ENCODE measurements at regions of chr6 and their contacts with region 1.

Region 1: GRCh38 chr6:53189554-53189953 is 40.9 kb upstream of the GCM1 start:
- DNase-seq: no peak
- ATAC-seq: peak; percentile 20; the same call in 2 of the 3 replicates
- H3K4me3 ChIP-seq: no peak overlapping the region
- H3K27ac ChIP-seq: no peak overlapping the region
- H3K4me1 ChIP-seq: no peaks in the 10 kb centered on the region; the same call in 1 of the 2 replicates
- H3K27me3 ChIP-seq: no peaks in the 10 kb centered on the region
- CTCF ChIP-seq: no peak
- EP300 ChIP-seq: no peak
- POLR2A ChIP-seq: no peak
- RAD21 ChIP-seq: no peak

Region 2: GRCh38 chr6:52801188-52801841 is 388.2 kb before region 1 on chr6:
- CTCF ChIA-PET with region 1: no interaction called
- POLR2A ChIA-PET with region 1: no interaction called
- RAD21 ChIA-PET with region 1: no interaction called
- SMC1A ChIA-PET with region 1: no interaction called
- in situ Hi-C with region 1: no loop called
- intact Hi-C with region 1: no loop called
- DNase-seq: no peak
- ATAC-seq: no peak
- H3K4me3 ChIP-seq: no peak overlapping the region
- H3K27ac ChIP-seq: no peak overlapping the region
- H3K4me1 ChIP-seq: no peaks in the 10 kb centered on the region
- H3K27me3 ChIP-seq: no peaks in the 10 kb centered on the region
- CTCF ChIP-seq: no peak
- EP300 ChIP-seq: no peak
- POLR2A ChIP-seq: no peak
- RAD21 ChIP-seq: no peak

Region 3: GRCh38 chr6:53233309-53233708 is 43.8 kb after region 1 on chr6:
- CTCF ChIA-PET with region 1: interaction called, 10 read pairs
- POLR2A ChIA-PET with region 1: interaction called, 5 read pairs
- RAD21 ChIA-PET with region 1: interaction called, 9 read pairs
- SMC1A ChIA-PET with region 1: interaction called, 20 read pairs
- in situ Hi-C with region 1: no loop called
- intact Hi-C with region 1: no loop called
- DNase-seq: no peak
- ATAC-seq: no peak
- H3K4me3 ChIP-seq: no peak overlapping the region
- H3K27ac ChIP-seq: no peak overlapping the region
- H3K4me1 ChIP-seq: peaks cover 26% of the 10 kb centered on the region
- H3K27me3 ChIP-seq: no peaks in the 10 kb centered on the region
- CTCF ChIP-seq: no peak
- EP300 ChIP-seq: no peak
- POLR2A ChIP-seq: no peak
- RAD21 ChIP-seq: no peak

Region 4: DNA sequence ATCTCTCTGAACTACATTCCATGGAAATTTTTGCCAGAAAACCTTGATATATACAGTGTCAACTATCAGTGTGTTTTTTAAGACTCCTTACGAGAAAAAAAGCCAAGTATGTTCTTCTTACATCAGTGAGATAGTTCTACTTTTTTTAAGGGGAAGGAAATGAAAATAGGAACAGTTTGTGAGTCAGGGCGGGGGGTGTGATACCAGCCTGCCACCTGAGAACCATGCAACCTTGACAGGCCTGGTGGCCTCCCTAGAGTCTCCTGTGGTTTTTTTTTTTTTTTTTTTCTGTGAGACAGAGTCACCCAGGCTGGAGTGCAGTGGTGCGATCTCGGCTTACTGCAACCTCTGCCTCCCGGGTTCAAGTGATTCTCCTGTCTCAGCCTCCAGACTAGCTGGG is 55.4 kb after region 1 on chr6:
- CTCF ChIA-PET with region 1: no interaction called
- POLR2A ChIA-PET with region 1: no interaction called
- RAD21 ChIA-PET with region 1: interaction called, 11 read pairs
- SMC1A ChIA-PET with region 1: interaction called, 14 read pairs
- in situ Hi-C with region 1: no loop called
- intact Hi-C with region 1: no loop called
- DNase-seq: peak; percentile 72
- ATAC-seq: peak; percentile 87
- H3K4me3 ChIP-seq: no peak overlapping the region
- H3K27ac ChIP-seq: no peak overlapping the region
- H3K4me1 ChIP-seq: peaks cover 35% of the 10 kb centered on the region
- H3K27me3 ChIP-seq: no peaks in the 10 kb centered on the region
- CTCF ChIP-seq: no peak
- EP300 ChIP-seq: peak in 1 of 2 experiments; percentile 51; a peak in 1 of 4 replicates
- POLR2A ChIP-seq: no peak
- RAD21 ChIP-seq: no peak

Region 5: GRCh38 chr6:53294095-53294494 is 104.5 kb after region 1 on chr6:
- CTCF ChIA-PET with region 1: interaction called, 5 read pairs
- POLR2A ChIA-PET with region 1: no interaction called
- RAD21 ChIA-PET with region 1: interaction called, 3 read pairs
- SMC1A ChIA-PET with region 1: interaction called, 21 read pairs
- in situ Hi-C with region 1: no loop called
- intact Hi-C with region 1: no loop called
- DNase-seq: no peak
- ATAC-seq: peak; percentile 61
- H3K4me3 ChIP-seq: no peak overlapping the region
- H3K27ac ChIP-seq: no peak overlapping the region
- H3K4me1 ChIP-seq: no peaks in the 10 kb centered on the region
- H3K27me3 ChIP-seq: no peaks in the 10 kb centered on the region
- CTCF ChIP-seq: peak; percentile 36 to 61 (median 60); a peak in 5 of 6 replicates
- EP300 ChIP-seq: no peak
- POLR2A ChIP-seq: no peak
- RAD21 ChIP-seq: peak; percentile 58

Region 6: GRCh38 chr6:53342217-53342616 is 152.7 kb after region 1 on chr6:
- CTCF ChIA-PET with region 1: interaction called, 5 read pairs
- POLR2A ChIA-PET with region 1: no interaction called
- RAD21 ChIA-PET with region 1: interaction called, 13 read pairs
- SMC1A ChIA-PET with region 1: interaction called, 11 read pairs
- in situ Hi-C with region 1: no loop called
- intact Hi-C with region 1: no loop called
- DNase-seq: no peak
- ATAC-seq: peak; percentile 28
- H3K4me3 ChIP-seq: peak overlapping the region; percentile 5; the same call in 1 of the 2 replicates
- H3K27ac ChIP-seq: no peak overlapping the region
- H3K4me1 ChIP-seq: peaks cover 23% of the 10 kb centered on the region
- H3K27me3 ChIP-seq: no peaks in the 10 kb centered on the region
- CTCF ChIP-seq: no peak
- EP300 ChIP-seq: no peak
- POLR2A ChIP-seq: no peak
- RAD21 ChIP-seq: no peak

Region 7: DNA sequence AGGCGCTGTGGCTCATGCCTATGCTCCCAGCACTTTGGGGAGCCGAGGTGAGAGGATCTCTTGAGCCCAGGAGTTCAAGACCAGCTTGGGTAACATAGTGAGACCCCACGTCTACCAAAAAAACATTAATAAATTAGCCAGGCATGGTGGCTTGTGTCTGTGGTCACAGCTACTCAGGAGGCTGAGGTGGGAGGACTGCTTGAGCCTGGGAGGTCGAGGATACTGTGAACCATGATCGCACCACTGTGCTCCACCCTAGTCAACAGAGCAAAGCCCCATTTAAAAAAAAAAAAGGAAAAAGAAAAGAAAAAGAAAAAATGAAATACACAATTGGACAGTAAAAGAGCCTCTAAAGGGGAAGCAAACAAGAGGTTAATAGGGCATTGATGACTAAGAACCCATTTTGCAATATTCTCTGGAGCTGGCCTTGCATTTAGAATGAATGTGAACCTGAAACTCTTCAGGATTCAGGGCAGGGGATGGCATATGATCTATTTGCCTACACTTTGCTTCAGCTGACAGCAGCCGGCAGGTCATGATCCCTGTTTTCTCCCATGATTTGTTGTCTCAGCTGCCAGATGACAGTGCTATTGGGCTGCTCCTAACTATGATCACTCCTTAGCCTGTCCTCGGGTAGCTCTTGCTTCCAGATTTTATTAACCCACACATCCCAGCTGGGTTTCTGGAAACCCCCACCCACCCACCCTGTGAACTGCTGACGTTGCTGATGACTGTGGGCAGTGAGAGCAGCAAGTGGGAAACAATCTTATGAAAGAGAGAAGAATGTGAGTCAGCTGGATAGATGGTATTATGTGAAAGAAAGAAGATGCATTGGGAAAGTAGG is 243.0 kb after region 1 on chr6:
- CTCF ChIA-PET with region 1: interaction called, 6 read pairs
- POLR2A ChIA-PET with region 1: no interaction called
- RAD21 ChIA-PET with region 1: interaction called, 13 read pairs
- SMC1A ChIA-PET with region 1: interaction called, 17 read pairs
- in situ Hi-C with region 1: no loop called
- intact Hi-C with region 1: no loop called
- DNase-seq: no peak
- ATAC-seq: peak; percentile 44
- H3K4me3 ChIP-seq: no peak overlapping the region
- H3K27ac ChIP-seq: no peak overlapping the region
- H3K4me1 ChIP-seq: no peaks in the 10 kb centered on the region
- H3K27me3 ChIP-seq: no peaks in the 10 kb centered on the region
- CTCF ChIP-seq: no peak
- EP300 ChIP-seq: no peak
- POLR2A ChIP-seq: no peak
- RAD21 ChIP-seq: no peak